Psoas muscle (tissue), 8 donors: ENCODE measurements at regions of chr1 and their contacts with region 1.

Region 1: GRCh38 chr1:211323156-211324063 is 3.2 kb upstream of the TRAF5 start:
- DNase-seq: no peak
- ATAC-seq: peak in 2 of 4 donors; percentile 41 to 57
- H3K4me3 ChIP-seq: no peak overlapping the region
- H3K27ac ChIP-seq: no peak overlapping the region
- H3K4me1 ChIP-seq: peaks cover 3% of the 10 kb centered on the region
- H3K27me3 ChIP-seq: no peaks in the 10 kb centered on the region
- CTCF ChIP-seq: peak; percentile 57

Region 2: DNA sequence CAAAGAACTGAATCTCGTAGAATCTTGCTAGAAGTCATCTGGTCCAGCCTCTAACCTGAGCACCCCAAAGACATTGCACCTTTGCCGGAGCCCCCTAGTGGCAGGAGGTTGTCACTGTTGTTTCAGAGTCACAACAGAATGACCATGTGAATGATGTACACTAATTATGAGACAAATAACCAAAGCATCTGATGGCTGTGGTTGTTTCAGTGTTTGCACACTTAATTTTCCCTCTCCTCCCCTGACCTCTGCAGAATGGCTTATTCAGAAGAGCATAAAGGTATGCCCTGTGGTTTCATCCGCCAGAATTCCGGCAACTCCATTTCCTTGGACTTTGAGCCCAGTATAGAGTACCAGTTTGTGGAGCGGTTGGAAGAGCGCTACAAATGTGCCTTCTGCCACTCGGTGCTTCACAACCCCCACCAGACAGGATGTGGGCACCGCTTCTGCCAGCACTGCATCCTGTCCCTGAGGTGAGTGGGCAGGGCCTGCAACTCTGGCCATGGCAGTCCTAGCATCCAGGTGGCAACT is 29.6 kb after region 1 on chr1:
- intact Hi-C with region 1: no loop called
- DNase-seq: no peak
- ATAC-seq: no peak
- H3K4me3 ChIP-seq: no peak overlapping the region
- H3K27ac ChIP-seq: no peak overlapping the region
- H3K4me1 ChIP-seq: no peaks in the 10 kb centered on the region
- H3K27me3 ChIP-seq: no peaks in the 10 kb centered on the region
- CTCF ChIP-seq: peak; percentile 42

Region 3: GRCh38 chr1:211382714-211383480 is 59.5 kb after region 1 on chr1:
- intact Hi-C with region 1: loop called in 1 of 2 experiments (anchors 5 kb)
- DNase-seq: peak; percentile 94 to 97
- ATAC-seq: peak; percentile 99 to 100 (median 100)
- H3K4me3 ChIP-seq: peak overlapping the region; percentile 74
- H3K27ac ChIP-seq: peak overlapping the region; percentile 90
- H3K4me1 ChIP-seq: peaks cover 5% of the 10 kb centered on the region
- H3K27me3 ChIP-seq: no peaks in the 10 kb centered on the region
- CTCF ChIP-seq: no peak

Region 4: GRCh38 chr1:211476200-211476849 is 152.9 kb after region 1 on chr1:
- intact Hi-C with region 1: loop called in 1 of 2 experiments (anchors 2 kb)
- DNase-seq: peak; percentile 56 to 67
- ATAC-seq: peak in 2 of 4 donors; percentile 64 to 65
- H3K4me3 ChIP-seq: no peak overlapping the region
- H3K27ac ChIP-seq: no peak overlapping the region
- H3K4me1 ChIP-seq: no peaks in the 10 kb centered on the region
- H3K27me3 ChIP-seq: peaks cover 0 to 17% (median 3%) of the 10 kb centered on the region in 3 donors
- CTCF ChIP-seq: peak; percentile 70

Region 5: DNA sequence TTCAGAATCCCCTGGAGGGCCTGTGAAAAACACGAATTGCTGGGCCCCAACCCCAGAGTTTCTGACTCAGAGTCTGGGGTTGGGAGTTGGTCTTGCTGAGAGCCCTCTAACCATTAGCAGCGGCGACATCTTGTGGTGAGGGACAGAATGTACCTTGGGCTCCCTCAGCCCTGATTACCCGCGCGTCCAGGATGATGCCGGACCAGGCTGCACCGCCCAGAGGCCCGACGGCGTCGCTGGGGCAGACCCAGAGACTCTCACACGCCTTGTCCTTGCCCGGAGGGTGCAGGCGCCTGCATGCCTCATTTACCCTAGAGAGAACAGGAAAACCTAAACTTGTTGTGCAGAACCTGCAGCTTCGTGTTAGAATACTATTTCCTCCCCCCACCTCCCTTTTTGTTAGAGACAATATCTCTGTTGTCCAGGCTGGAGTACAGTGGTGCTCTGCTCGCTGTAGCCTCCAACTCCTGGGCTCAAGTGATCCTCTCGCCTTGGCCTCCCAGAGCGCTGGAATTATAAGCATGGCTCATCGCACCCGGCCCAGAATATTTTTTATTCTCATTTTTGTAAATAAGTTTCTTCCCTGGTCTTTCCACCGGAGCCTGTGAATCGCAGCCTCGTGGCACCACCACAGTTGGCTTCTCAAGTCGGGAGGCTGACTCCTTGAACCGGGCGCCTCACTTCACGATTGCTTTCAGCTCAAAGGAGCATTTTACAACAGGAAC is 190.8 kb after region 1 on chr1:
- intact Hi-C with region 1: loop called in 1 of 2 experiments (anchors 10 kb)
- DNase-seq: peak; percentile 74 to 84
- ATAC-seq: peak; percentile 82 to 92 (median 84)
- H3K4me3 ChIP-seq: no peak overlapping the region
- H3K27ac ChIP-seq: no peak overlapping the region
- H3K4me1 ChIP-seq: no peaks in the 10 kb centered on the region
- H3K27me3 ChIP-seq: peaks cover 0 to 11% (median 0%) of the 10 kb centered on the region in 3 donors
- CTCF ChIP-seq: peak; percentile 66